Esophagus muscularis mucosa (tissue), 4 donors: ENCODE measurements at regions of chr2 and their contacts with region 1.

Region 1: GRCh38 chr2:210169516-210170199 is 1.6 kb downstream of the KANSL1L start:
- DNase-seq: no peak
- H3K4me3 ChIP-seq: peak overlapping the region; percentile 87 to 98 (median 94)
- H3K27ac ChIP-seq: peak overlapping the region; percentile 99 to 100 (median 100)
- H3K4me1 ChIP-seq: peaks cover 37 to 50% (median 48%) of the 10 kb centered on the region in 4 donors
- H3K27me3 ChIP-seq: no peaks in the 10 kb centered on the region
- CTCF ChIP-seq: no peak
- EP300 ChIP-seq: no peak
- POLR2A ChIP-seq: no peak

Region 2: GRCh38 chr2:209913786-209914345 is 255.8 kb before region 1 on chr2:
- intact Hi-C with region 1: no loop called
- DNase-seq: no peak
- H3K4me3 ChIP-seq: no peak overlapping the region
- H3K27ac ChIP-seq: no peak overlapping the region
- H3K4me1 ChIP-seq: no peaks in the 10 kb centered on the region
- H3K27me3 ChIP-seq: no peaks in the 10 kb centered on the region
- CTCF ChIP-seq: no peak
- EP300 ChIP-seq: no peak
- POLR2A ChIP-seq: no peak

Region 3: DNA sequence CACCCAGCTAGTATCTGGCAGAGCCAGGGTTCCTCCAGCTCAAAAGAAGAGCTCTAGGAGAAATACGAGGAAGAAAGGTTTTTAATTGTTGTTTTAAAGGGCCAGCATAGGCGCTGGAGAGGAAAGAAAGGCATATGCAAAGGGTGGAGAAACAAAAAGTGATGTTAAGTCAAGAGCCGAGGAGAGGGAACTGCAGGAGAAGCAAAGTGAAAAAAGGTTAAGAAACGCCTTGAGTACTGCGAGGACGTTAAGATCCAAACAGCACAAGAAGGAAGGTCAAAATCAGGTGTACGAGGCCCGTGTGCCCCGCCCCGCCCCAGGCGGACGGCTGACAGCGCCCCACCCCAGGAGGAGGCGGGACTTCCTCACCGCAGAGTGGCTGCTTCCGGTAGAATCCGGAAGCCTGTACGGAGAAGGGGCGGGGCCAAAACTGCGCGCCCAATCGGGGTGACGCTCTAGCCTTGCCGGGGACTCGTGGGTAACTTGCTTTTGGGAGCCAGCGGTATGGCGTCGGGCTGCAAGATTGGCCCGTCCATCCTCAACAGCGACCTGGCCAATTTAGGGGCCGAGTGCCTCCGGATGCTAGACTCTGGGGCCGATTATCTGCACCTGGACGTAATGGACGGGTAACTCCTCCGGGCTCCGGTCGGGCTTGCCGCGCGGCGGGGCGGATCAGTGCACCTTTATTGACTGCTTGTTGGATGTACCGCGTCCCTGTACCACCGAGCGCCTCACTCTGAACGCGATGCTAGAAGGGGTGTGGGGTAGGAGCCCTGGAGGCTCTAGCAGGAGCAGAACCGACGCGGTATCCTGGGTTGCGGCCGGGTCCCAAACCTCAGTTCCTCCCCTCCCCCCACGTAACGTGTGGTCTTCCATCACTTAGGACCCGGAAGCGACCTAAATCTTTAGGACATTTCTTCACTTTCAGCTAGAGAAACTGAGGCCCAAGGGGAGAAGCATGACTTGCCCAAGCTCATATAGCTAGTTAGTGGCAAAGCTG is 167.2 kb before region 1 on chr2 and contains the start of gene RPE:
- intact Hi-C with region 1: loop called (anchors 2 kb)
- DNase-seq: peak; percentile 98
- H3K4me3 ChIP-seq: peak within 1 kb of the TSS; percentile 70 to 96 (median 78)
- H3K27ac ChIP-seq: peak within 1 kb of the TSS; percentile 79 to 86 (median 83)
- H3K4me1 ChIP-seq: peaks cover 28 to 52% (median 49%) of the 10 kb centered on the region in 4 donors
- H3K27me3 ChIP-seq: no peaks in the 10 kb centered on the region
- CTCF ChIP-seq: no peak
- EP300 ChIP-seq: no peak
- POLR2A ChIP-seq: no peak
- total RNA-seq, gene RPE: 37.0 to 49.4 (median 39.5) TPM

Region 4: DNA sequence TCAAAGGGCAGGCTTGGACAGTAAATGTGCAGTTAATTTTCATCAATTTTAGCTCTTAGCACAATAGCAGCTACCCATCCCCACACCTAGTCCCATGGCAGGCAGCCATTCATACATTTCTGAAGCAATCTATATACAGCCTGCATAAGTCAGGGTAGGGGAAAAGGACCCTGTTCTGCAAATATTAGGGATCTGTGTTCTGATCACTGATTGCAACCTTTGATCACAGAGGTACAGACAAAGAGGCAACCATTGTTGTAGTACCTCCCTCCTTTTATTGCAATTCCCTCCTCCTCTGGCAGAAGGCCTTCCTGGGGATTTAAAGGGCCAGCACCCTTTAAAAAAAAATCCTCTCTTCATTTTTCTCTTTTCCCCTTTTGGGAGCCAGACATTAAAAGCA is 56.8 kb before region 1 on chr2:
- intact Hi-C with region 1: no loop called
- DNase-seq: no peak
- H3K4me3 ChIP-seq: no peak overlapping the region
- H3K27ac ChIP-seq: no peak overlapping the region
- H3K4me1 ChIP-seq: no peaks in the 10 kb centered on the region
- H3K27me3 ChIP-seq: no peaks in the 10 kb centered on the region
- CTCF ChIP-seq: no peak
- EP300 ChIP-seq: no peak
- POLR2A ChIP-seq: no peak

Region 5: DNA sequence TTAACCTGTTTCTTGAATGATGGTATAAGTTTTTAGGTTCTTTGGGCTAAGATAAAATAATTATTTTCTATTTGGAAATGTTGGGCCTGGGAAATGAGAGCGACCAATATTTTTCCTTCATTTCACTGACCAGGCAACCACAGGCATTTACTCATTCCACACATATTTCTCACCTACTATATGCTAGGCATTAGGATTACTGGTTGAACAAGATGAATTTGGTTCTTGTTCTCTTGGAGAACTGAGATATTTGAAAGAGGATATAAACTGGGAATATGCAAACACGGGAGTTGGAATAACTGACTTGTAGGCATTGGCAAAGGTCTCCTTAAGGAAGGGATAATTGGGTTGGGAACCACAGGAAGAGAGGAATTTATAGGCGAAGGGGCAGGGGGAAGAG is 149.2 kb after region 1 on chr2:
- intact Hi-C with region 1: no loop called
- DNase-seq: no peak
- H3K4me3 ChIP-seq: no peak overlapping the region
- H3K27ac ChIP-seq: no peak overlapping the region
- H3K4me1 ChIP-seq: no peaks in the 10 kb centered on the region
- H3K27me3 ChIP-seq: no peaks in the 10 kb centered on the region
- CTCF ChIP-seq: no peak
- EP300 ChIP-seq: no peak
- POLR2A ChIP-seq: no peak